ENCODE measurements at regions of chr5 and their contacts with region 1.

Region 1: DNA sequence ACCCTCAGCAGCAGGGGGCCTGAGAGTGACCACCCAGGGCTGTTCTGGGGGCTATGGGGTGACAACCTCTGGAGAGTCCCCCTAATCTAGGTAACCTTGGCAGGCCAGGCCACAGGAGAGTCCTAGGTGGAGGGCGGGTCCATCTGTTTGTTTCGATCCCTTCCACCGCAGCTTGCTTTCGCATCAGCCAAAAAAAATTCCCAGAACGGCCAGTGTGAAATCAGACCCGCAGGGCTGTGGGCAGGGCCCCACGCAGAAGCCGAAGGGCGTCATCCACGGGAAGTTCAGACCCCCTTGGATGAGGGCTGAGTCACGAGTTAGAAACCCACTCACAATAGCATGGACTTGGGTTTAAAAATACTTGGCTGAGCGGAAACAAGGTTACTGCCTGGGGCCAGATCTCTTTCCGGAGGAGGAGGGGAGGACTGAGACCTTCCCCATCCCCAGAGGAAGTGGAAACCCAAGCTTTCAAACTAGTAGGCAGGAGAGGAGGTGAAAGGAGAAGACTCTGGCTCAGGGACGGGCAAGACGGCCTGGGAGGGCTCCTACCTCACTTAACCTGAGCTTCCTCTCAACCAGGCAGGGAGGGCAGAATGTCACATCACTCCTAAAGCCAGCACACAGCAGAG is 8.5 kb downstream of the STK10 start:
- DNase-seq: peak in 25 of 35 experiments; percentile 8 to 71 (median 28)
- ATAC-seq: peak; percentile 1 to 20 (median 10)
- H3K4me3 ChIP-seq: peak overlapping the region; percentile 54 to 67
- H3K4me3 Mint-ChIP-seq: peak overlapping the region; percentile 79 to 95 (median 89)
- H3K27ac ChIP-seq: peak overlapping the region; percentile 95
- H3K27ac Mint-ChIP-seq: peak overlapping the region; percentile 100
- H3K4me1 ChIP-seq: peaks cover 62 to 97% of the 10 kb centered on the region in 2 experiments
- H3K4me1 Mint-ChIP-seq: peaks cover 84 to 98% (median 94%) of the 10 kb centered on the region in 3 donors
- H3K27me3 ChIP-seq: no peaks in the 10 kb centered on the region
- H3K27me3 Mint-ChIP-seq: no peaks in the 10 kb centered on the region

Region 2: DNA sequence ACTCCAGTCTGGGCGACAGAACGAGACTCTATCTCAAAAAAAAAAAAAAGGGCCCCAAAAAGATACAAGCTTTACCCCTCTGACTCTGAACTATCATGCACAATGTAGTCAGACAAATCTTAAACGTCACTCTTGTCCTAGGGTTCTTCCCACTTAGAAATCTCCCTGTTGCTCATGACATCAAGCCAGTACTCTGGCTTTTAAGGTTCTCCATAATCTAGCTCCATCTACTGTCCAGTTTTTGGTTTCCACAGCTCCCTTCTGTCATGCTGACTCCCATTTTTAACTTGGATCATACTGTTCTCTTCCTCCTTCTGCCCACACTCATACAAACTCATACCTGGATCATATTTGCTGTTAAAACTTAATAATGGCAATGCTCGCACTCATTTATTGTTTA is 1027.1 kb before region 1 on chr5:
- CTCF ChIA-PET with region 1: no interaction called
- POLR2A ChIA-PET with region 1: no interaction called
- DNase-seq: no peak
- ATAC-seq: no peak
- H3K4me3 ChIP-seq: no peak overlapping the region
- H3K4me3 Mint-ChIP-seq: no peak overlapping the region
- H3K27ac ChIP-seq: no peak overlapping the region
- H3K27ac Mint-ChIP-seq: no peak overlapping the region
- H3K4me1 ChIP-seq: no peaks in the 10 kb centered on the region
- H3K4me1 Mint-ChIP-seq: no peaks in the 10 kb centered on the region
- H3K27me3 ChIP-seq: peaks cover 0 to 3% of the 10 kb centered on the region in 2 experiments
- H3K27me3 Mint-ChIP-seq: peaks cover 3 to 7% of the 10 kb centered on the region in 2 donors

Region 3: DNA sequence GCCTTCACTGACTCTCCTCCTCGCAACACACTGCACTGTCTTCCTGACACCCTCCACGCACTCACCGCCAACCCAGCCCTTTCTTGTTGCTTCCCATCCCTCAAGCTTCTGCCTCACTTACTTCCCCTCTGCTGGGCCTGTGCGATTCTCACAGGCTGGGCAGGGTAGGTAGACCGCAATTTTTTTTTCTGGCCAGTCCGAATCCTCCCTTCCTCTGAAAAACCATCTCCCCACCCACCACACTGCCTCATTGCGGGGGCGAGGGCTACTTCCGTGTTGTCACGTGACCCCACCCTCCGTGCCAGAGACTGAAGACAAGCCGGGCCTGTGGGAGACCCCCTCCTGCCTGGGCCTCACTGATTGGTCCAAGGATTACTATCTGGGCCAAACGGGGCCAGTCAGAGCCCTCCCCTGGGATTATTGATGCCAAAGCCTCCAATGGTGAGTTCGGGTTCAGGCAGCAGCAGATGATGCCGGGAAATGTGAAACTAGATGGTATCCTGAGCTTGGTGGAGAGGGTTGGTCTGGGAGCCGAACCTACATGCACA is 64.5 kb before region 1 on chr5:
- CTCF ChIA-PET with region 1: interaction called, 3 to 10 read pairs
- POLR2A ChIA-PET with region 1: interaction called, 3 to 4 read pairs
- DNase-seq: peak in 34 of 35 experiments; percentile 34 to 82 (median 56)
- ATAC-seq: peak; percentile 8 to 56 (median 20)
- H3K4me3 ChIP-seq: peak overlapping the region; percentile 24 to 51
- H3K4me3 Mint-ChIP-seq: peak overlapping the region; percentile 45 to 76 (median 63)
- H3K27ac ChIP-seq: peak overlapping the region; percentile 89
- H3K27ac Mint-ChIP-seq: peak overlapping the region; percentile 90 to 94
- H3K4me1 ChIP-seq: peaks cover 38 to 95% of the 10 kb centered on the region in 2 experiments
- H3K4me1 Mint-ChIP-seq: peaks cover 80 to 88% (median 84%) of the 10 kb centered on the region in 3 donors
- H3K27me3 ChIP-seq: no peaks in the 10 kb centered on the region
- H3K27me3 Mint-ChIP-seq: no peaks in the 10 kb centered on the region